Naive thymus-derived CD4-positive, alpha-beta T cell (primary cell): ENCODE measurements at regions of chr1 and their contacts with region 1.

Region 1: GRCh38 chr1:23619299-23620188 is 60.2 kb upstream of the ID3 start:
- DNase-seq: peak; percentile 58 to 88 (median 84)
- ATAC-seq: peak; percentile 93
- H3K4me3 ChIP-seq: peak overlapping the region; percentile 65
- H3K4me3 Mint-ChIP-seq: peak overlapping the region; percentile 63 to 85 (median 78)
- H3K27ac ChIP-seq: peak overlapping the region; percentile 81
- H3K27ac Mint-ChIP-seq: peak overlapping the region; percentile 84 to 99 (median 97)
- H3K4me1 ChIP-seq: peaks cover 45 to 79% of the 10 kb centered on the region in 2 donors
- H3K4me1 Mint-ChIP-seq: peaks cover 68 to 97% (median 90%) of the 10 kb centered on the region in 7 donors
- H3K27me3 ChIP-seq: no peaks in the 10 kb centered on the region
- H3K27me3 Mint-ChIP-seq: peaks cover 0 to 11% (median 0%) of the 10 kb centered on the region in 5 donors

Region 2: GRCh38 chr1:23577056-23578004 is 42.2 kb before region 1 on chr1:
- CTCF ChIA-PET with region 1: interaction called, 3 read pairs
- POLR2A ChIA-PET with region 1: interaction called, 1,267 read pairs
- intact Hi-C with region 1: no loop called
- DNase-seq: peak in 1 of 9 donors; percentile 50
- ATAC-seq: peak; percentile 79
- H3K4me3 ChIP-seq: peak overlapping the region; percentile 25
- H3K4me3 Mint-ChIP-seq: peak overlapping the region; percentile 41 to 72 (median 62)
- H3K27ac ChIP-seq: peak overlapping the region; percentile 59
- H3K27ac Mint-ChIP-seq: peak overlapping the region; percentile 22 to 97 (median 84)
- H3K4me1 ChIP-seq: peaks cover 6 to 29% of the 10 kb centered on the region in 2 donors
- H3K4me1 Mint-ChIP-seq: peaks cover 12 to 67% (median 53%) of the 10 kb centered on the region in 7 donors
- H3K27me3 ChIP-seq: no peaks in the 10 kb centered on the region
- H3K27me3 Mint-ChIP-seq: no peaks in the 10 kb centered on the region

Region 3: DNA sequence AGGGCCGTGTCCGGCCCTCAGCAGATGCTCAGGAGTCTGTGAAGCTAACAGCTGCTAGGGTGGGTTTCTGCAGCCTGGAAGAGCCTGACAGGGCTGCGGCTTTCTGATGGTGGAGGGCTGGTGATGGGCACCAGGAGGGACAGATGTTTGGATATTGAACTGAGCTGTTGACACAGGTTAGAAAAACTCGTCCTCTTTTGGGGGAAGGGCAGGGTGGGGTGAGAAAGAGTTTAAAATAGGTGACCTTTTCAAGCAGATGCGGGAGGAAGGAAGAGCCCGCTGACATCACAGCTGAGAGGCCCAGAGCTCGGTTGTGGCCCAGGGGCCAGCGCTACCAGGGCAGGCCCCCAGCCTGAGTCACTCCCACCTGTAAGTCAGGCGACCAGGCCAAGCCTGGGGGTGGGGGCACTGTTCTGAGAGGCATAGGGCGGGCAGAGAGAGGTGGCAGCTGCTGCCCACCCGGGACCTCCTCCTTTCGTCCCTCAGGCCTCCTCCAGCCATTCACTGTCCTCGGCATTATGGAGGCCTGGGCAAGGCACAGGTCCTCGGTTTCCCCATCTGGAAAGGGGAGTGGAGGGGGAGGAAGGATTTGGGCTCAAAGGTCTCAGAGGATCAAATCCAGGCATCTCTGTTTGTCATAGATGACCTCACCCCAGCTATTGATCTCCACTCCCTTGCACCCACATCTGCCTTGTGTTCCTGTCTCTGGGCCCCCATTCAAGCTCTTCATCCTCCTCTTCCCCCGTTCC is 27.9 kb before region 1 on chr1:
- CTCF ChIA-PET with region 1: interaction called, 6 read pairs
- POLR2A ChIA-PET with region 1: interaction called, 1,267 read pairs
- intact Hi-C with region 1: no loop called
- DNase-seq: peak in 1 of 9 donors; percentile 53
- ATAC-seq: peak; percentile 58
- H3K4me3 ChIP-seq: no peak overlapping the region
- H3K4me3 Mint-ChIP-seq: peak overlapping the region in 9 of 10 donors; percentile 9 to 75 (median 53)
- H3K27ac ChIP-seq: no peak overlapping the region
- H3K27ac Mint-ChIP-seq: peak overlapping the region; percentile 28 to 93 (median 77)
- H3K4me1 ChIP-seq: peaks cover 31 to 46% of the 10 kb centered on the region in 2 donors
- H3K4me1 Mint-ChIP-seq: peaks cover 42 to 83% (median 62%) of the 10 kb centered on the region in 7 donors
- H3K27me3 ChIP-seq: no peaks in the 10 kb centered on the region
- H3K27me3 Mint-ChIP-seq: no peaks in the 10 kb centered on the region

Region 4: GRCh38 chr1:23598424-23598823 is 21.1 kb before region 1 on chr1:
- CTCF ChIA-PET with region 1: interaction called, 5 read pairs
- POLR2A ChIA-PET with region 1: interaction called, 1,267 read pairs
- intact Hi-C with region 1: loop called (anchors 1 to 2 kb)
- DNase-seq: no peak
- ATAC-seq: no peak
- H3K4me3 ChIP-seq: no peak overlapping the region
- H3K4me3 Mint-ChIP-seq: peak overlapping the region in 5 of 10 donors; percentile 6 to 88 (median 69)
- H3K27ac ChIP-seq: peak overlapping the region; percentile 40
- H3K27ac Mint-ChIP-seq: peak overlapping the region in 6 of 9 donors; percentile 3 to 84 (median 72)
- H3K4me1 ChIP-seq: peaks cover 73 to 92% of the 10 kb centered on the region in 2 donors
- H3K4me1 Mint-ChIP-seq: peaks cover 50 to 97% (median 85%) of the 10 kb centered on the region in 7 donors
- H3K27me3 ChIP-seq: no peaks in the 10 kb centered on the region
- H3K27me3 Mint-ChIP-seq: no peaks in the 10 kb centered on the region

Region 5: DNA sequence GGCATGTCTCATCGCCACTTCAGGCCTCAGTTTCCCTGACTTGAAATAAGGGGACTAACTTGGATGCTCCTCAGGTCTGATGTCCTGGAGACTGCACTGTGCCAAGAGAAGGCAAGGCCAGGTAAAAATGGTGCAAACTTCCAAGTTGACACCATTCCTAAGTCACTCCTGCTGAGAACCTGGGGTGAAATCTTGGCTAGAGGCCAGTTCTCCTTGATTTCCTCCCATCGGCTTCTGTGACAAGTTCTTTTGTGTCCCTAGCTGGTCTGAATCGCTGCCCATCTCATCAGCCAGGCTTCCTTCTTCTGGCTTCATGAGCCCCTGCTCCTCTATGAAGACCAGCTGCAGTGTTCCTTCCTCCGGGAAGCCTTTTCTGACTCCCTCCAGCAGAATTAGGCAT is 11.6 kb before region 1 on chr1:
- CTCF ChIA-PET with region 1: interaction called, 3 read pairs
- POLR2A ChIA-PET with region 1: interaction called, 1,267 read pairs
- intact Hi-C with region 1: loop called in 1 of 2 experiments (anchors 1 kb)
- DNase-seq: no peak
- ATAC-seq: no peak
- H3K4me3 ChIP-seq: no peak overlapping the region
- H3K4me3 Mint-ChIP-seq: peak overlapping the region in 2 of 10 donors; percentile 30 to 63
- H3K27ac ChIP-seq: peak overlapping the region; percentile 5
- H3K27ac Mint-ChIP-seq: peak overlapping the region in 8 of 9 donors; percentile 13 to 97 (median 88)
- H3K4me1 ChIP-seq: peaks cover 22 to 65% of the 10 kb centered on the region in 2 donors
- H3K4me1 Mint-ChIP-seq: peaks cover 41 to 80% (median 74%) of the 10 kb centered on the region in 7 donors
- H3K27me3 ChIP-seq: no peaks in the 10 kb centered on the region
- H3K27me3 Mint-ChIP-seq: peaks cover 0 to 2% (median 0%) of the 10 kb centered on the region in 5 donors

Region 6: DNA sequence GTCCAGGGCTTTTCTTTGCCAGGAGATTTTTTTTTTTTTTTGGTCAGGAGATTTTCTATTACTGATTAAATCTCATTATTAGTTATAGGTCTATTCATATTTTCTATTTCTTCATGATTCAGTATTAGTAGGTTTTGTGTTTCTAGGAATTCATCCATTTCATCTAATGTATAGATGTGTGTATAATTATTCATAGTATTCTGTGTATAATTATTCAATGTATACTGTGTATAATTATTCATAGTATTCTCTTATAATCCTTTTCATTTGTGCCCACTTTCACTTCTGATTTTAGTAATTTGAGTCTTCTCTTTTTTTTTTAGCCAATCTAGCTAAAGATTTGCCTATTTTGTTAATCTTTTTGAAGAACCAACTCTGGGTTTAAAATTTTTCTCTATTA is 327.8 kb after region 1 on chr1:
- CTCF ChIA-PET with region 1: no interaction called
- POLR2A ChIA-PET with region 1: no interaction called
- intact Hi-C with region 1: no loop called
- DNase-seq: no peak
- ATAC-seq: no peak
- H3K4me3 ChIP-seq: no peak overlapping the region
- H3K4me3 Mint-ChIP-seq: no peak overlapping the region
- H3K27ac ChIP-seq: no peak overlapping the region
- H3K27ac Mint-ChIP-seq: no peak overlapping the region
- H3K4me1 ChIP-seq: no peaks in the 10 kb centered on the region
- H3K4me1 Mint-ChIP-seq: no peaks in the 10 kb centered on the region
- H3K27me3 ChIP-seq: no peaks in the 10 kb centered on the region
- H3K27me3 Mint-ChIP-seq: peaks cover 0 to 26% (median 5%) of the 10 kb centered on the region in 5 donors